ENCODE measurements at regions of chr3 and their contacts with region 1.

Region 1: DNA sequence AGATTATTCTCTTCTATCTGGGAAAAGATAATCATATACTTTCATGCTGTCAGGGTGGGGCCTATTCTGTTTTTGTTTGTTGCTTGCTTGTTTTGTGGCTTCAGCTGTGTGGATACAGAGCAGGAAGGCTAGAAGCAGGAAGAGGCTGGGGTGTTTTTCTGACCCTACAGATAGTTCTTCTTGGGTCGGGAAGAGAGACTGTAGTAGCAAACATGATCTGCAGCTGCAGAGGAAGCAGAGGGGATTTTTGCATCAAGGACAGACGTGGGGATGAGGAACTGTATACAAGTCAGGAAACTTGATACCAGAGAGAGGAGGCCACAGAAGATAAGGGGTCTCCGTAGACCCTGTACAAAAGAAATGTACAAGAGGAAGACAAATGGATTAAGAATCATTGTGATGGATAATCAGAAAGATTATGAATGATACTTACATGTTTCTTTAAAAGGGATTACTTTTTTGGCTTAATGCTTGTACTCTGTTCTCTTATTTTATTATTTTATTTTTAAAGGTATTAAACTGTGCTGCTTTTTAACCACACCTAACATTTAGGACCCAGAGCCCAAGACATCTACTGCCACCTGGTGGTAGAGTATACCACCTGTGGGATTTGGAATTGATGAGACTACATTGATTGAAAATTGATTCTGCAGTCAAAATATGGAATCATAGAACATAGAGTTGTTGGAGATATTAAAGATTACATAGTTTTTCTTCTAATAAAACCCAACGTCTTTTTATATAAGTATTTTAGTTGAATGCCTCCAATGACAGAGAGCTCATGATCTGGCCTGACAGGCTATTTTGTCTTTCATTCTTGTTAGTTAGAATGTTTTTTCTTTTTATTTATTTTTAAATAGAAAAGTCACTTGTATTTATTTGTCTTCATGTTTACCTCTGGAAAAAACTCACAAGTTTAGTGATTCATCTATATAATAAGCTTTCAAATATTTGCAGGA is 87.3 kb upstream of the ROPN1 start:
- DNase-seq: peak in 2 of 6 donors; percentile 16 to 34
- ATAC-seq: peak in 3 of 4 donors; percentile 70 to 88 (median 76)
- H3K4me3 ChIP-seq: no peak overlapping the region
- H3K27ac ChIP-seq: no peak overlapping the region
- H3K4me1 ChIP-seq: no peaks in the 10 kb centered on the region
- H3K27me3 ChIP-seq: no peaks in the 10 kb centered on the region
- CTCF ChIP-seq: peak; percentile 57 to 85 (median 66)

Region 2: DNA sequence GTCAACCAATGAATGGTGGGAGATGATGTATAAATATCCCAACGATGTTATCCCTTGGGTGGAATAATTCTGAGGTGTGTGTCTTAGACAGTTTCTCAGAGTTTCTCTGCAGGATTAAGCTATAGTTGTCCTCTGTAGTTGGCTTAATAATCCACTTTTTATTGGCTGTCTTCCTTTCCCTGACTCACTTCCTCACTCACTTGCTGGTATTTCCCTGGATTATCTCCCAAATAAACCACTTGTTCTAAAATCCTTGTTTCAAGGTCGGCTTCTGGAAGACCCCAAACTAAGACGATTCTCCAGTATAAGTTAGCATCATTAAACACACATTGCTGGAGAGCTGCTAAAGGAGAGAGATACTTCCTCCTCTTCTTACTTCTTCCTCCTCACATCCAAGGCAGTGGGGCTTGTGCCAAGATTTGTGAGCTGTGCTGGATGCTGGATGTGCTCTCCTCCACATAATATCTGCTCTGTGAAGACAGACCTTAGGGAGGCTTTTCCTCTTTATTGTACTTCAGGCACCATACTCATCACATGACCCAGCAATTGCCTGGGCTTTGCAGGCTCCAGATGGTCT is 64.8 kb before region 1 on chr3:
- intact Hi-C with region 1: loop called in 1 of 3 experiments (anchors 5 kb)
- DNase-seq: no peak
- ATAC-seq: no peak
- H3K4me3 ChIP-seq: no peak overlapping the region
- H3K27ac ChIP-seq: no peak overlapping the region
- H3K4me1 ChIP-seq: peaks cover 3 to 5% (median 3%) of the 10 kb centered on the region in 3 donors
- H3K27me3 ChIP-seq: peaks cover 0 to 8% (median 0%) of the 10 kb centered on the region in 4 donors
- CTCF ChIP-seq: no peak